WTC11 (cell line): ENCODE measurements at regions of chr2 and their contacts with region 1.

Region 1: GRCh38 chr2:118003396-118003824 is 10.5 kb downstream of the CCDC93 start:
- DNase-seq: peak; percentile 25
- ATAC-seq: peak; percentile 99
- H3K4me3 Mint-ChIP-seq: no peak overlapping the region
- H3K27ac Mint-ChIP-seq: no peak overlapping the region
- H3K4me1 Mint-ChIP-seq: peaks cover 2% of the 10 kb centered on the region; the same call in 1 of the 2 replicates
- H3K27me3 Mint-ChIP-seq: no peaks in the 10 kb centered on the region
- CTCF ChIP-seq: peak; percentile 65; the same call in 1 of the 2 replicates

Region 2: GRCh38 chr2:117835990-117836760 is 167.2 kb before region 1 on chr2:
- CTCF ChIA-PET with region 1: interaction called, 43 read pairs
- POLR2A ChIA-PET with region 1: no interaction called
- DNase-seq: peak; percentile 88
- ATAC-seq: peak; percentile 85
- H3K4me3 Mint-ChIP-seq: peak overlapping the region; percentile 67
- H3K27ac Mint-ChIP-seq: no peak overlapping the region
- H3K4me1 Mint-ChIP-seq: peaks cover 15% of the 10 kb centered on the region
- H3K27me3 Mint-ChIP-seq: peaks cover 9% of the 10 kb centered on the region
- CTCF ChIP-seq: peak; percentile 46; the same call in 1 of the 2 replicates

Region 3: DNA sequence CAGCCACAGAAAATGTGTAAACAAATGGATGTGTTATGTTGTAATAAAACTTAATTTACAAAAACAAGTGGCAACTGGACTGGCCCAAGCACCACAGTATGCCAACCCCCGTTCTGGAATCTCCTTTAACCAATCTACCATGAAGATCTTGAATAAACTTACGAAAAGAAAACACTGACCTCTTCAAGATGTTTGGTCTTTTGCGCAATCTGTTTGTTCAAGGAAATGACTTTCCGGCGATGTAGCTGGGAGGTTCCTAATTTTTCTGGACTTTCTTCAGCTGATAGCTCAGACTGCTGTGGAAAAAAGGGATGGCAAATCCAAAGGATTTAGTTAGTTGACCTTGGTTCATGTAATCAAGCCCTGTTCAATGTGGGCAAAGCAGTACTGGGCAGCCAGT is 45.2 kb before region 1 on chr2:
- CTCF ChIA-PET with region 1: interaction called, 14 read pairs
- POLR2A ChIA-PET with region 1: no interaction called
- DNase-seq: no peak
- ATAC-seq: no peak
- H3K4me3 Mint-ChIP-seq: no peak overlapping the region
- H3K27ac Mint-ChIP-seq: no peak overlapping the region
- H3K4me1 Mint-ChIP-seq: no peaks in the 10 kb centered on the region
- H3K27me3 Mint-ChIP-seq: no peaks in the 10 kb centered on the region
- CTCF ChIP-seq: no peak

Region 4: GRCh38 chr2:118013724-118014491 is 10.5 kb after region 1 on chr2 and contains the start of gene CCDC93:
- CTCF ChIA-PET with region 1: interaction called, 31 read pairs
- POLR2A ChIA-PET with region 1: interaction called, 3 read pairs
- DNase-seq: peak; percentile 84
- ATAC-seq: peak; percentile 86
- H3K4me3 Mint-ChIP-seq: peak within 1 kb of the TSS; percentile 86
- H3K27ac Mint-ChIP-seq: no peak within 1 kb of the TSS
- H3K4me1 Mint-ChIP-seq: peaks cover 20% of the 10 kb centered on the region
- H3K27me3 Mint-ChIP-seq: peaks cover 47% of the 10 kb centered on the region
- CTCF ChIP-seq: no peak
- total RNA-seq, gene CCDC93: 14.0 to 16.9 TPM (median 16.4 TPM) in 3 replicates

Region 5: GRCh38 chr2:118046634-118047210 is 43.3 kb after region 1 on chr2:
- CTCF ChIA-PET with region 1: interaction called, 20 read pairs
- POLR2A ChIA-PET with region 1: no interaction called
- DNase-seq: no peak
- ATAC-seq: 0 out of 2 replicates have a peak, but pooled peaks have one; percentile 34
- H3K4me3 Mint-ChIP-seq: no peak overlapping the region
- H3K27ac Mint-ChIP-seq: no peak overlapping the region
- H3K4me1 Mint-ChIP-seq: peaks cover 10% of the 10 kb centered on the region
- H3K27me3 Mint-ChIP-seq: peaks cover 5% of the 10 kb centered on the region; the same call in 1 of the 2 replicates
- CTCF ChIP-seq: peak; percentile 33; the same call in 1 of the 2 replicates

Region 6: GRCh38 chr2:118459424-118459823 is 456.0 kb after region 1 on chr2:
- CTCF ChIA-PET with region 1: no interaction called
- POLR2A ChIA-PET with region 1: no interaction called
- DNase-seq: no peak
- ATAC-seq: no peak
- H3K4me3 Mint-ChIP-seq: no peak overlapping the region
- H3K27ac Mint-ChIP-seq: no peak overlapping the region
- H3K4me1 Mint-ChIP-seq: peaks cover 10% of the 10 kb centered on the region
- H3K27me3 Mint-ChIP-seq: no peaks in the 10 kb centered on the region
- CTCF ChIP-seq: no peak